Activated CD4-positive, alpha-beta T cell treated with anti-CD3 and anti-CD28 coated beads for 36 hours (primary cell): ENCODE measurements at regions of chr5 and their contacts with region 1.

Region 1: GRCh38 chr5:88490874-88491273 is 222.2 kb upstream of the TMEM161B start:
- DNase-seq: no peak
- ATAC-seq: no peak
- H3K4me3 Mint-ChIP-seq: no peak overlapping the region
- H3K27ac Mint-ChIP-seq: no peak overlapping the region
- H3K4me1 Mint-ChIP-seq: no peaks in the 10 kb centered on the region
- H3K27me3 Mint-ChIP-seq: peaks cover 21% of the 10 kb centered on the region

Region 2: GRCh38 chr5:87936667-87937066 is 554.2 kb before region 1 on chr5:
- CTCF ChIA-PET with region 1: no interaction called
- POLR2A ChIA-PET with region 1: interaction called, 11 read pairs
- intact Hi-C with region 1: no loop called
- DNase-seq: no peak
- ATAC-seq: no peak
- H3K4me3 Mint-ChIP-seq: no peak overlapping the region
- H3K27ac Mint-ChIP-seq: no peak overlapping the region
- H3K4me1 Mint-ChIP-seq: no peaks in the 10 kb centered on the region
- H3K27me3 Mint-ChIP-seq: no peaks in the 10 kb centered on the region